ENCODE measurements at regions of chr6 and their contacts with region 1.

Region 1: GRCh38 chr6:45421709-45422502 is 44.2 kb upstream of the SUPT3H start:
- DNase-seq: peak; percentile 60 to 69 (median 63)
- ATAC-seq: peak; percentile 81
- H3K4me3 ChIP-seq: peak overlapping the region; percentile 55
- H3K27ac ChIP-seq: no peak overlapping the region
- H3K4me1 ChIP-seq: peaks cover 0 to 41% of the 10 kb centered on the region in 2 experiments; a peak in 4 of 5 replicates
- H3K27me3 ChIP-seq: peaks cover 9 to 19% of the 10 kb centered on the region in 2 experiments; a peak in 4 of 5 replicates
- CTCF ChIP-seq: peak; percentile 25 to 46 (median 44); a peak in 4 of 6 replicates
- EP300 ChIP-seq: no peak
- POLR2A ChIP-seq: no peak
- RAD21 ChIP-seq: peak; percentile 67 to 72

Region 2: DNA sequence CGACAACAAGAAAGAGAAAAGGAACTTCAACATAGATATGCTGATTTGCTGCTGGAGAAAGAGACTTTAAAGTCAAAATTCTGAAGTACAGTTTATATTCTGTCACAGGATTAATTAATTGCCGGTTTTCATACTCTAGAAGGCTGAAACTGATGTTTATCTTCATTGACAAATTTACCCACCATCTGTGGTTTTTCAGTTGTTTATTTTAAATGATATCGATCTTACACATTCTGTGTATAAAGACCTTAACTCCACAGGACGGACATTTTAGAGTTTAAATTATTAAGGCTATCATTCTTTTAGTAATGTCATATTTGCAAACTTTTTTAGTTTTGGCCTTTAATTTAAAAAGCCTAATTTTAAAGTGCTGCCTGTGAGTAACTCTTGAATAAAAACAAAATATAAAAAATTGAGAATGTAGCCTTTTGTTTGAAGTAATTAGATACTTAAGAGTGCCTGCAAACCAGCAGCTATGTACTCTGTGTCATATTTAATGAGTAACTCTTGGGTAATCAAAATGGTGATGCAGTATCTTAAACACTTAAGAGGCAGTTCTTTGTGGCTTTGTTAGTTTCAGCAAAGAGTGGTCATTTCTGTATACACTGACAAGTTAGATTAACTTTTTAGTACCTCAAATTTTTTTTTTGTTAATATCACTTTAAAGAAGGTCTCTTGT is 975.1 kb before region 1 on chr6:
- CTCF ChIA-PET with region 1: no interaction called
- POLR2A ChIA-PET with region 1: no interaction called
- in situ Hi-C with region 1: no loop called
- intact Hi-C with region 1: no loop called
- DNase-seq: no peak
- ATAC-seq: no peak
- H3K4me3 ChIP-seq: no peak overlapping the region
- H3K27ac ChIP-seq: no peak overlapping the region
- H3K4me1 ChIP-seq: no peaks in the 10 kb centered on the region; a peak in 1 of 5 replicates
- H3K27me3 ChIP-seq: no peaks in the 10 kb centered on the region
- CTCF ChIP-seq: no peak
- EP300 ChIP-seq: no peak
- POLR2A ChIP-seq: no peak
- RAD21 ChIP-seq: no peak

Region 3: GRCh38 chr6:44667668-44668390 is 754.1 kb before region 1 on chr6:
- CTCF ChIA-PET with region 1: no interaction called
- POLR2A ChIA-PET with region 1: no interaction called
- in situ Hi-C with region 1: loop called (anchors 10 kb)
- intact Hi-C with region 1: no loop called
- DNase-seq: peak; percentile 43 to 60 (median 53)
- ATAC-seq: peak; percentile 93
- H3K4me3 ChIP-seq: no peak overlapping the region
- H3K27ac ChIP-seq: no peak overlapping the region
- H3K4me1 ChIP-seq: no peaks in the 10 kb centered on the region
- H3K27me3 ChIP-seq: peaks cover 11 to 55% of the 10 kb centered on the region in 2 experiments
- CTCF ChIP-seq: peak; percentile 69 to 85 (median 69)
- EP300 ChIP-seq: no peak
- POLR2A ChIP-seq: no peak
- RAD21 ChIP-seq: peak; percentile 58 to 59

Region 4: GRCh38 chr6:44842616-44843015 is 579.3 kb before region 1 on chr6:
- CTCF ChIA-PET with region 1: no interaction called
- POLR2A ChIA-PET with region 1: no interaction called
- in situ Hi-C with region 1: no loop called
- intact Hi-C with region 1: no loop called
- DNase-seq: no peak
- ATAC-seq: no peak
- H3K4me3 ChIP-seq: no peak overlapping the region
- H3K27ac ChIP-seq: no peak overlapping the region
- H3K4me1 ChIP-seq: no peaks in the 10 kb centered on the region
- H3K27me3 ChIP-seq: 0 out of 5 replicates have a peak, but pooled peaks cover 0 to 8% of the 10 kb centered on the region in 2 experiments
- CTCF ChIP-seq: no peak
- EP300 ChIP-seq: no peak
- POLR2A ChIP-seq: no peak
- RAD21 ChIP-seq: no peak

Region 5: DNA sequence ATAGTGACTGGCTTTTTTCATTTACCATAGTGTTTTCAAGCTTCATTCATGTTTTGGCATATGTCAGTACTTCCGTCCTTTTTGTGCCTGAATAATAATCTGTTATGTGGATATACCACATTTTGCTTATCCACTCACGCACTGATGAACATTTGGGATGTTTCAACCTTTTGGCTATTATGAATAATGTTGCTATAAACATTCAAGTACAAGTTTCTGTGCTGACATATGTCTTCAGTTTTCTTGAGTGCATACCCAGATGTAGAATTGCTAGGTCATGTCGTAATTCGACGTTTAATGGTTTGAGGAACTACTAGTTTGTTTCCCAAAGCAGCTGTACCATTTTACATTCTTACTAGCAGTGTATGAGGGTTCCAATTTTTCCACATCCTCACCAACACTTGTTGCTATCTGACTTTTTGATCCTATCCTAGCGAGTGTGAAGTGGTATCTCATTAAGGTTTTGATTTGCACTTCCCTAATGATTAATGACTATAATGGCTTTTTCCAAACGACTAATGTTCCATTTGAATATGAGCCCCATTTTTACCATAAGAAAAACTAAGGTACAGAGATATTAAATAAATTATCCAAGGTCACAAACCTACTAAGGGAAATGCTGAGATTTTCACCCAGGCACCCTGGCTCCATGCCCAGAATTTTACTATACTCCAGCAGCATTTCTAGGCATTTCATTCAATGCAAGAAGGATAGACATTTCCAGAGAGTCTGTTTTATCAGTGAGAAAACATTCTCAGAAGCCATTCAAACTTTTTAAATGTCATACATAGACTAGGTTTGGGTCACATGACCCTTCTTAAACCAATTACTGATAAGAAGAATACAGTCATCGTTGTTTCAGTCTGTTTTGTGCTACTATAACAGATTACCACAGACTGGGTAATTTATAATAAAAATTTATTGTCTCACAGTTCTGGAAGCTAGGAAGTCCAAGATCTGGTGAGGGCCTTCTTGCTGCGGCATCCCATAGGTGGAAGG is 164.9 kb before region 1 on chr6:
- CTCF ChIA-PET with region 1: no interaction called
- POLR2A ChIA-PET with region 1: no interaction called
- in situ Hi-C with region 1: no loop called
- intact Hi-C with region 1: no loop called
- DNase-seq: peak in 1 of 4 experiments; percentile 5
- ATAC-seq: no peak
- H3K4me3 ChIP-seq: no peak overlapping the region
- H3K27ac ChIP-seq: no peak overlapping the region
- H3K4me1 ChIP-seq: no peaks in the 10 kb centered on the region
- H3K27me3 ChIP-seq: no peaks in the 10 kb centered on the region
- CTCF ChIP-seq: no peak
- EP300 ChIP-seq: no peak
- POLR2A ChIP-seq: no peak
- RAD21 ChIP-seq: no peak

Region 6: GRCh38 chr6:45436544-45437438 is 14.9 kb after region 1 on chr6:
- CTCF ChIA-PET with region 1: no interaction called
- POLR2A ChIA-PET with region 1: interaction called, 10 read pairs
- in situ Hi-C with region 1: no loop called
- intact Hi-C with region 1: no loop called
- DNase-seq: peak; percentile 28 to 78 (median 40)
- ATAC-seq: peak; percentile 82
- H3K4me3 ChIP-seq: no peak overlapping the region
- H3K27ac ChIP-seq: peak overlapping the region; percentile 58
- H3K4me1 ChIP-seq: peaks cover 0 to 48% of the 10 kb centered on the region in 2 experiments; a peak in 4 of 5 replicates
- H3K27me3 ChIP-seq: no peaks in the 10 kb centered on the region
- CTCF ChIP-seq: no peak
- EP300 ChIP-seq: peak; percentile 96
- POLR2A ChIP-seq: no peak
- RAD21 ChIP-seq: peak in 1 of 2 experiments; percentile 12; a peak in 2 of 4 replicates

Region 7: DNA sequence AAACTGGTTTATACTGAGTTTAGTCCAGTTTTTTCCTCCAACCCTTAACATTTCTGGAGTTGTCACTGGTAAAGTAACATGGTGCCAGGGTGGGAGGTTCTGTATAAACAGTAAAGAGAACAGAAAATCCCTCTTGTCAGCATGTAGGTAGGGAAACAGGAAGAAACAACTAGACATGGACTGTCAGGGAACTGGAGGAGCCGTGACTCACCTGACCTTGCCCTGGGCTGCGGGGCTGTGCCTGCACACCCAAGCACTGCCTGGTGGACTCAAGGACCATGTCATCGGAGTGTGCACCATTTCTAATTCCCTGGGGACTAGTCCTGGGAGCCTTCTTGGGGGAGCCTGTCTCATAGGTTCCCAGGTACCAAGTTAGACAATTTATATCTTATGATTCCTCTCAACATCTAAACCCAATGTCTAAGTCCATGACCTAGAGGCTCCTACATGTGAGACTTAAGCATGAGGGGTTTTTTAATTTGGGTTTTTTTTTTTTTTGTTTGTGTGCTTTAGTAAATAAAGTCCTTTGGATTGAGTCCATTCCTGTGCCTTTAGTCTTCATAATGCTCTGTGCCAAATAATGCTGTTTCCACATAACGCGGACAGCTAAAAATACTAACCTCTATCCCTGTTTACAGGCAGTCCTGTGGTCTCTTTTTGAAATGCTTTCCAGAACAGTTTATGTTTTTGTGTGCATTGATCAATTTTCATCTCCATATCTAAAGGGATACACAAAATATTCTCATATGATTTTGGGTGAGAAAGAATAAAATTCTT is 92.7 kb after region 1 on chr6:
- CTCF ChIA-PET with region 1: no interaction called
- POLR2A ChIA-PET with region 1: no interaction called
- in situ Hi-C with region 1: no loop called
- intact Hi-C with region 1: no loop called
- DNase-seq: peak in 1 of 4 experiments; percentile 16
- ATAC-seq: no peak
- H3K4me3 ChIP-seq: no peak overlapping the region
- H3K27ac ChIP-seq: no peak overlapping the region
- H3K4me1 ChIP-seq: no peaks in the 10 kb centered on the region
- H3K27me3 ChIP-seq: no peaks in the 10 kb centered on the region; a peak in 1 of 5 replicates
- CTCF ChIP-seq: no peak
- EP300 ChIP-seq: no peak
- POLR2A ChIP-seq: no peak
- RAD21 ChIP-seq: no peak

Region 8: GRCh38 chr6:45554591-45554990 is 132.7 kb after region 1 on chr6:
- CTCF ChIA-PET with region 1: no interaction called
- POLR2A ChIA-PET with region 1: no interaction called
- in situ Hi-C with region 1: no loop called
- intact Hi-C with region 1: loop called (anchors 5 kb)
- DNase-seq: no peak
- ATAC-seq: no peak
- H3K4me3 ChIP-seq: no peak overlapping the region
- H3K27ac ChIP-seq: no peak overlapping the region
- H3K4me1 ChIP-seq: no peaks in the 10 kb centered on the region; a peak in 2 of 5 replicates
- H3K27me3 ChIP-seq: peaks cover 4 to 19% of the 10 kb centered on the region in 2 experiments; a peak in 4 of 5 replicates
- CTCF ChIP-seq: no peak
- EP300 ChIP-seq: no peak
- POLR2A ChIP-seq: no peak
- RAD21 ChIP-seq: no peak

Region 9: DNA sequence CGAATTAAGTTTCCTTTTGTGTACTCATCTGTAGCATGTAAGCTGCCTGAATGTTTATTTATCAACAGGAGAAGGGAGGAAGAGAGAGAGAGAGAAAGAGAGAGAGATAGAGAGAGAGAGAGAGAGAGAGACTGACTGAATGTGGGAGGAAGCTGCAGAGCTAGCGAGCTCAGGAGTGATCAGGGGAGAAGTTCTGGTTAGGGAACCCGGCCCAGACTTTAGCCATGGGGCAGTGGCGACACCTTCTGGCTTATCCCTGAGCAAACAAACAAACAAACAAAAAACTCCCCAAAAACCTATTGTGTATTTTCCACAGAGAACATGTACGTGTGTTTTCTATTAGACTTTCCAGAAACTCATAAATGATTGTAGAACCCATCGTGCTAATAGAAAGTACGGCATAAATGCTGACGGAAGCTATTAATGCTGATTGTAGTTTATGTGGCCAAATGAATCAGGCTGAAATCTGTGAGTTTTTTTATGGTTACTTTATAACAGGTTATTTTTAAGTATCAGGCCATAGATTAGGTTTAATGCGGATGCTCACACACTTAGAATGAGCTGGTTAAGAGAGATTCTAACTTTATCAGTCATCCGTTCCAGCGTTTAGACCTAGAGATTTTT is 500.9 kb after region 1 on chr6:
- CTCF ChIA-PET with region 1: no interaction called
- POLR2A ChIA-PET with region 1: no interaction called
- in situ Hi-C with region 1: no loop called
- intact Hi-C with region 1: loop called (anchors 2 kb)
- DNase-seq: peak; percentile 42 to 62 (median 46)
- ATAC-seq: peak; percentile 86
- H3K4me3 ChIP-seq: no peak overlapping the region
- H3K27ac ChIP-seq: no peak overlapping the region
- H3K4me1 ChIP-seq: no peaks in the 10 kb centered on the region
- H3K27me3 ChIP-seq: no peaks in the 10 kb centered on the region; a peak in 1 of 5 replicates
- CTCF ChIP-seq: peak; percentile 69 to 91 (median 80)
- EP300 ChIP-seq: no peak
- POLR2A ChIP-seq: no peak
- RAD21 ChIP-seq: peak; percentile 87 to 93

Measured in K562 (cell line).